ENCODE measurements at regions of chr19 and their contacts with region 1.

Region 1: DNA sequence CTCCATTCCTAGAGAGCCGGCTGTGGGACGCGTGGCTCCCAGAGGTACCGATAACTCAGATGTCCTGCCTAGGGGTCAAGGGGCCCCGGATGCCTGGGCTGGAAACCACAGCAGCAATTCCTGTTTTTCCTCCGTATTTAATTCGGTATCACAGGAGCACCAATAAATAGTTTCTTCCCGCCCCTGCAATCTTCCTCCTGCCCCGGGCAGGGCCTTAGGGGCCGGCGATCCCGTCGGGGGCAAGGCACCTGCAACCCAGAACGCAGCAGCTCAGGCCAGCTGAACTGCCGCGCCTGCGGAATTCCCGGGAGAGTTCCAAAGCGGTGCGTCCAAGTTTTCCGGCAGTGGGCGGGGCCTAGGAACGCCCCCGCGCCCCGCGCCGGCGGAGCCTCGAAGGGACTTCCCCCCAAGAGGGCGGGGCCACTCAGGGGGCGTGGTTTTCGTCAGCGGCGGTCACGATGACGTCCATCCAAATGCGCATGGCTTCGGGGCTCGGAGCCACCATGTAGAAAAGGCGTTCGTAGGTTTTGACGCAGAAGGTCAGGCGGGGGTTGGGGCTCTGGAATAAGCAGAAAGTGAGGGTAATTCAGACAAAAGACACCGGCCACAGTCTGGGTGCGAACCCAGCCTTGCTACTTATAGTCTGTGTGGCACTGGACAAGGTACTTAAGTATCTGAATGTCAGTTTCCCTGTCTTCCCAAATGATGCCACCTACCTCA is 9.7 kb upstream of the LYPD3 start:
- DNase-seq: peak; percentile 92 to 99 (median 96)
- ATAC-seq: peak; percentile 84
- H3K4me3 ChIP-seq: peak overlapping the region; percentile 8 to 48
- H3K4me3 Mint-ChIP-seq: peak overlapping the region; percentile 82
- H3K27ac ChIP-seq: peak overlapping the region; percentile 72 to 89
- H3K27ac Mint-ChIP-seq: peak overlapping the region; percentile 97
- H3K4me1 ChIP-seq: peaks cover 48% of the 10 kb centered on the region
- H3K4me1 Mint-ChIP-seq: peaks cover 42% of the 10 kb centered on the region
- H3K27me3 ChIP-seq: no peaks in the 10 kb centered on the region
- H3K27me3 Mint-ChIP-seq: no peaks in the 10 kb centered on the region
- CTCF ChIP-seq: no peak

Region 2: DNA sequence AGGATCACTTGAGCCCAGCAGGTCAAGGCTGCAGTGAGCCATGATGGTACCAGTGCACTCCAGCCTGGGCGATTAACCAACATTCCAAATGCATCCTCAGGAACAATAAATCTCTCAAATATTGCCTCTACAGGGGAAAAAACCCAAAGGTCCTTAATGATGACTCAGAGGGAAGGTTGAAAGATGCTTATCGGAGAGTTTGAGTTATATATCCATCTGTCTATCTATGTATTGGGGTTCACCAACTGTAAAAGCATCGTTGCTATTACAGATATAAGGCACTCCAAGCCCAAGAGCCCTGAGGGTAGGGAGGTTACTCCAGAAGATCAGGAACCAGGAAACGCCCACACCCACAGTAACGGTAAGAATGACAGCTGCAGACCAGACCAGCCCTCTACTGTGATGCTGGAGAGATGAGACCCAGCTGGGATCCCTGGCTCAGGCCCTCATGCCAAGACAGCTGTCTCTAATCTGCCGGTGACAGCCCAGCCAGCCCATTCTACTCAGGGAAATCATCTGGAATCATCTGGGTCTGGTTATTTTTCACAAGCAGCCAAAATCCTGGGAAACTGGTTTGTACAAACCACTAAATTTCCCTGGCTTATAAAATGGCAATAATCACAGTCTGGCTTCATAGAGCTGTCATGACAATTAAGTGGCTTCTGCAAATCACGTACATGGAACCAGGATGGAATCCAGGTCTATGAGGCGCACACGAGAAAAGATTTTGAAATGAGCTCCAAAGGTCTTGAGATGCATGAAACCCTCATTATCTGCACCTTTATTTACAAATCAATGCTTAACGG is 36.7 kb before region 1 on chr19:
- CTCF ChIA-PET with region 1: interaction called, 3 read pairs
- POLR2A ChIA-PET with region 1: interaction called, 5 read pairs
- intact Hi-C with region 1: loop called in 1 of 2 experiments (anchors 2 kb)
- DNase-seq: peak in 3 of 9 experiments; percentile 16 to 33 (median 22)
- ATAC-seq: peak; percentile 25
- H3K4me3 ChIP-seq: peak overlapping the region in 1 of 2 experiments; percentile 10
- H3K4me3 Mint-ChIP-seq: peak overlapping the region; percentile 44
- H3K27ac ChIP-seq: peak overlapping the region; percentile 64 to 88
- H3K27ac Mint-ChIP-seq: peak overlapping the region; percentile 96
- H3K4me1 ChIP-seq: peaks cover 33% of the 10 kb centered on the region
- H3K4me1 Mint-ChIP-seq: peaks cover 56% of the 10 kb centered on the region
- H3K27me3 ChIP-seq: no peaks in the 10 kb centered on the region
- H3K27me3 Mint-ChIP-seq: no peaks in the 10 kb centered on the region
- CTCF ChIP-seq: no peak

Region 3: GRCh38 chr19:43503501-43504425 is 28.6 kb after region 1 on chr19:
- CTCF ChIA-PET with region 1: interaction called, 3 read pairs
- POLR2A ChIA-PET with region 1: interaction called, 3 read pairs
- intact Hi-C with region 1: loop called (anchors 1 kb)
- DNase-seq: peak; percentile 98 to 100 (median 99)
- ATAC-seq: peak; percentile 95
- H3K4me3 ChIP-seq: peak overlapping the region; percentile 97
- H3K4me3 Mint-ChIP-seq: peak overlapping the region; percentile 97
- H3K27ac ChIP-seq: peak overlapping the region; percentile 84 to 86
- H3K27ac Mint-ChIP-seq: peak overlapping the region; percentile 96
- H3K4me1 ChIP-seq: peaks cover 19% of the 10 kb centered on the region
- H3K4me1 Mint-ChIP-seq: peaks cover 34% of the 10 kb centered on the region
- H3K27me3 ChIP-seq: no peaks in the 10 kb centered on the region
- H3K27me3 Mint-ChIP-seq: no peaks in the 10 kb centered on the region
- CTCF ChIP-seq: no peak

Measured in CD8-positive, alpha-beta T cell (primary cell).